ENCODE measurements at regions of chr13 and their contacts with region 1.

Region 1: GRCh38 chr13:102291587-102292218 is 110.1 kb downstream of the FGF14 start:
- DNase-seq: no peak
- ATAC-seq: peak in 1 of 4 donors; percentile 49
- H3K4me3 ChIP-seq: no peak overlapping the region
- H3K27ac ChIP-seq: no peak overlapping the region
- H3K4me1 ChIP-seq: peaks cover 0 to 24% (median 10%) of the 10 kb centered on the region in 12 donors
- H3K27me3 ChIP-seq: no peaks in the 10 kb centered on the region
- CTCF ChIP-seq: no peak
- POLR2A ChIP-seq: no peak

Region 2: DNA sequence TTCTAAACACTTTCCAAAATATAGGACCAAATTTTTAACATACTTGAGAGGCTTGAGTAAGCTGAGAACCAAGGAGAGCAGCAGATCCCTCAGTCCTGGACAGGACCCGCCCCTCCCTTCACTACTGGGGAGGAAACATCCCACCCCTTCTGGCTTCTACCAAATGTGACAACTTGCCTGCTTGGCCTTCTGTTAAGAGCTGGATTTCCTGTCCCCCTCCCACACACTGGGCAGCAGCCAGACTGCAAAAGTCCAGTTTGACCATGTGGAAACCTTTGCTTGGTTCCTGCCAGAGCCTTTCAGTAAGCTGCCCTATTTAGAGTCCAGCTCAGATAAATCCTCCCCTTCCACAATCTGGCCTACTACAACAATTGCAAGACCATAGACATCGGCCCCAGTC is 25.9 kb after region 1 on chr13:
- intact Hi-C with region 1: loop called in 1 of 10 experiments (anchors 2 kb)
- DNase-seq: peak; percentile 83 to 90 (median 89)
- ATAC-seq: peak; percentile 87 to 98 (median 97)
- H3K4me3 ChIP-seq: no peak overlapping the region
- H3K27ac ChIP-seq: peak overlapping the region in 8 of 12 donors; percentile 46 to 78 (median 60)
- H3K4me1 ChIP-seq: peaks cover 0 to 33% (median 15%) of the 10 kb centered on the region in 12 donors
- H3K27me3 ChIP-seq: no peaks in the 10 kb centered on the region
- CTCF ChIP-seq: no peak
- POLR2A ChIP-seq: no peak

Measured in heart left ventricle (tissue), 16 donors.